Activated CD4-positive, alpha-beta T cell treated with anti-CD3 and anti-CD28 coated beads, Interleukin-2, amount 10 ng/mL, durations not matched to agents 24 days and 14 days (primary cell): ENCODE measurements at regions of chr11 and their contacts with region 1.

Region 1: GRCh38 chr11:128522055-128522942 is 65.1 kb downstream of the ETS1 start:
- DNase-seq: peak; percentile 97
- H3K4me3 Mint-ChIP-seq: peak overlapping the region; percentile 93
- H3K27ac Mint-ChIP-seq: peak overlapping the region; percentile 99
- H3K4me1 Mint-ChIP-seq: peaks cover 54% of the 10 kb centered on the region
- H3K27me3 Mint-ChIP-seq: no peaks in the 10 kb centered on the region

Region 2: DNA sequence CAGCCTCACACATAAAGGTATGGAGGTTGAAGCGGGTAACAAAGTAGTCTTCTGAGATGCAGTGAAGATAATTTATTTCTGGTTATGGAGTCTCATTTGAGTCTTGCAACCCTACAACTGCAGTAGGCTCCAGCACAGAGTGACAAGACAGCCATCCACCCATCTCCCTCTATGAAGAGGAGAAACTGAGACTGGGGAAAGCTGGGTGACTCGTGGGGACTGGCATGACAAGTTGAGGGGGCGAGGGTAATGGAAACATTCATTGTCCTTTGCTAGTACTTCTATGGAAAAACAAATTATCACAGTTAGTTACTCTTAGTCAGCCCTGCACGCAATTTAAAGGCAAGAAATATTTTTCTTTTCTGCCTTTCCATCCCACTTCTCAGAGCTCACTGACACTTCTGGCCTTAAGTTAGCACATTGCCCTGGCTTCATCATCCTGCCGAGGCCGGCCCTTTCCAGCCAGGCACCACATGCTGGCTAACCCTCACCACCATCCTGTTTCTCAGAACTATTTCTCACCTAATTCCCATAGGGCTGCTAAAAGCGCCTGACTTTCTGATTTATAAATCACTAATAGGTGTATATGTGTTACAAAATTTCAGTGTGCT is 296.1 kb before region 1 on chr11:
- intact Hi-C with region 1: loop called (anchors 2 kb)
- DNase-seq: peak; percentile 58
- H3K4me3 Mint-ChIP-seq: peak overlapping the region; percentile 39
- H3K27ac Mint-ChIP-seq: peak overlapping the region; percentile 91
- H3K4me1 Mint-ChIP-seq: peaks cover 33% of the 10 kb centered on the region
- H3K27me3 Mint-ChIP-seq: no peaks in the 10 kb centered on the region

Region 3: DNA sequence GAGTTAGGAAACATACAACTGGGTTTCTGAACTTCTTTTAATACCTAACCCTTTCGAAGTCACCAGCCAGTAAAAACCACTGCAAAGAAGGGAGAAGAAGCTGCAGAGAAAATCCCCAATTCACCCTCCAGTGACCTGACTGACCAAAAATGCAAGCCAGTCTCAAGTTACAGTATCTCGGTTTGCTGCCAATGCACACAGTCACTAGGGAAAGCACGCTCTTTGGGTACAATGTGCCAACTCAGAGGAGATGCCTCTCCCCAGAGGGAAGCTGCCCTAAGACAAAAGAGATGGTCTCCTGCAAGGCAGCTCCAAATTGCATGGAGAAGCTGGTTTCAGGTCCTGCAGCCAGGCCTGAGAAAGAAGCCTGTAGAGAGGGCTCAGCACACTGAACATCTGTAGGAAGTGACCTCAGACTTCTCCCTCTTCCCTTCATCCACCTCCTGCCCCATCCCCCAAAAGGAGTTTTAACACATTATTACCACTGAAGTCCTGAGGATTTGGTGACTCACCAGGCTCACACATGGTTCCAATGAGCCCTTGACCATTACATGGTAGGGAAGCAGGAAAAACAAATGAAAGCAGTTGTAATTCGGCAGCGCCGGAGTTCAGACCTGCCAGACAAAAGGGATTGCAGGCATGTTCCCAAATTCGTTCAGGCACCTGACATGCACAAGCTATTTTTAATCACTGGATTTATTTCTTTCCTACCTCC is 25.1 kb before region 1 on chr11:
- intact Hi-C with region 1: loop called (anchors 1 kb)
- DNase-seq: peak; percentile 77
- H3K4me3 Mint-ChIP-seq: peak overlapping the region; percentile 82
- H3K27ac Mint-ChIP-seq: peak overlapping the region; percentile 96
- H3K4me1 Mint-ChIP-seq: peaks cover 92% of the 10 kb centered on the region
- H3K27me3 Mint-ChIP-seq: no peaks in the 10 kb centered on the region

Region 4: GRCh38 chr11:128544471-128545051 is 22.3 kb after region 1 on chr11:
- intact Hi-C with region 1: no loop called
- DNase-seq: no peak
- H3K4me3 Mint-ChIP-seq: peak overlapping the region; percentile 34
- H3K27ac Mint-ChIP-seq: peak overlapping the region; percentile 35
- H3K4me1 Mint-ChIP-seq: peaks cover 30% of the 10 kb centered on the region
- H3K27me3 Mint-ChIP-seq: no peaks in the 10 kb centered on the region

Region 5: GRCh38 chr11:128574576-128575011 is 52.3 kb after region 1 on chr11:
- intact Hi-C with region 1: loop called (anchors 1 kb)
- DNase-seq: no peak
- H3K4me3 Mint-ChIP-seq: no peak overlapping the region
- H3K27ac Mint-ChIP-seq: no peak overlapping the region
- H3K4me1 Mint-ChIP-seq: peaks cover 28% of the 10 kb centered on the region
- H3K27me3 Mint-ChIP-seq: no peaks in the 10 kb centered on the region

Region 6: GRCh38 chr11:128695539-128696221 is 173.4 kb after region 1 on chr11:
- intact Hi-C with region 1: loop called (anchors 2 kb)
- DNase-seq: peak; percentile 83
- H3K4me3 Mint-ChIP-seq: peak overlapping the region; percentile 93
- H3K27ac Mint-ChIP-seq: peak overlapping the region; percentile 92
- H3K4me1 Mint-ChIP-seq: peaks cover 64% of the 10 kb centered on the region
- H3K27me3 Mint-ChIP-seq: peaks cover 19% of the 10 kb centered on the region

Region 7: DNA sequence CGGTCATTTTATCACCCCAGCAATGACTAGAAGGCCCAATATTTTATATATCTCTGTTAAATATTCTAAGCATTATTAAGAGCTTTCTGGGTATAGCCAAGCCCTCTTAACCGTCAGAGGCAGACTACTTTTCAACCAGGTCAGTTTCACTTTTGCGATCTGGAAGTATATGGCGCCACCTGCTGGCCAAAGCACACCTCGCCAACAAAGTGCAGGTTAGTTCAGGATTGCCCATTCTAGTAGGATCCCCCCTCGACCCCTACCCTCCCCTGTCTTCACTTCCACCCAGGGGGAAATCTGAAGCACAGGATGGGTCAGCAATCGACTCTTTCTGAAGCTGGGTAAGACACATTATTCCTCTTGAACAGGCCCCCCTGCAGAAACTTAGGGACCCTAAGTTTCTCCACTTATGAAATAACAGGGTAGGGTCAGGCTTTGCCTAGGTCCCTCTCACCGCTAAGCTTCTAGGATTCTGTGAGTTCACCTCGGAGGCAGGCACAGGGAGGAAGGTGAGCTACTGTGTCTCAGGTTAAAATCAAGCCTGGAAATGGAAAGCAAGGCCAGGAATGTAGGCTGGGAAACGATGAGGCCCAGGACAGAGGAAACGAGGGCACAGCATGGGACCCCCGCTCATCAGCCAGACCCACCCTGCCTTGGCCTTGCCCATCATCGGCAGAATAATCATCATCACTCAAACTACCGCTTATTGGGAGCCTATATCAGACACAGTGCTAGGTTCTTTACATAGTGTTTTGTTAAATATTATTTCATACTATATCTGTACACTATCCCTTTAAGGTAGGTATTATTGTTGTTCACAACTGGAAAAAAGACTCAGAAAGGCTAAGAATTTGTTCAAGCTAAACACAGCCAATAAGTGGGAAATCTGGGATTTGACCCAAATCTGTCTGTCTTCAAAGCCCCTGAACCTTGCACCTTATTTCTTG is 309.1 kb after region 1 on chr11:
- intact Hi-C with region 1: loop called (anchors 5 kb)
- DNase-seq: peak; percentile 95
- H3K4me3 Mint-ChIP-seq: peak overlapping the region; percentile 53
- H3K27ac Mint-ChIP-seq: no peak overlapping the region
- H3K4me1 Mint-ChIP-seq: peaks cover 22% of the 10 kb centered on the region
- H3K27me3 Mint-ChIP-seq: no peaks in the 10 kb centered on the region